Endothelial cell of umbilical vein (primary cell): ENCODE measurements at regions of chr10 and their contacts with region 1.

Region 1: GRCh38 chr10:118568327-118568848 is 27.1 kb downstream of the PRLHR start:
- DNase-seq: peak; percentile 61
- H3K4me3 ChIP-seq: no peak overlapping the region
- H3K27ac ChIP-seq: no peak overlapping the region
- H3K4me1 ChIP-seq: no peaks in the 10 kb centered on the region
- H3K27me3 ChIP-seq: peaks cover 0 to 6% of the 10 kb centered on the region in 2 experiments
- CTCF ChIP-seq: peak; percentile 45 to 52
- POLR2A ChIP-seq: no peak

Region 2: DNA sequence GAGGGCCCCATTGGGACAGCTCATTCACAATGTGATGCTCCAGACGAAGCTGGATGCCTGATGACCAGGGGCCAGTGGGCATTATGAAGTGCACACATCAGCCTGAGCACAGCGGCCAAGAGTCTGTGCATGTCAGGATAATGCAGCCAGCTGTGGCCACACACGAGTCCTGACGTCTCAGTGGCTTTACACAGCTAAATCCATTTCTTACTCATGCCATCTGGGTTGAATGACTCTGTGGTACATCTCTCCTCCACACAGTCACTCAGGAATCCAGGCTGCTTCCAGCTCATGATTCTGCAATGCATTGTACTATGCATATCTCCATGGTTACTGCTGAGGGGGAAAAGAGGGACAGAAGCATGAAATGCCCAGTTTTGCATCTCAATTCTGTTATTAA is 96.5 kb before region 1 on chr10:
- CTCF ChIA-PET with region 1: no interaction called
- POLR2A ChIA-PET with region 1: no interaction called
- dilution Hi-C with region 1: no loop called
- intact Hi-C with region 1: no loop called
- DNase-seq: no peak
- H3K4me3 ChIP-seq: no peak overlapping the region
- H3K27ac ChIP-seq: no peak overlapping the region
- H3K4me1 ChIP-seq: no peaks in the 10 kb centered on the region
- H3K27me3 ChIP-seq: no peaks in the 10 kb centered on the region
- CTCF ChIP-seq: no peak
- POLR2A ChIP-seq: no peak

Region 3: GRCh38 chr10:118557946-118558345 is 10.4 kb before region 1 on chr10:
- CTCF ChIA-PET with region 1: interaction called, 22 read pairs
- POLR2A ChIA-PET with region 1: no interaction called
- dilution Hi-C with region 1: no loop called
- intact Hi-C with region 1: no loop called
- DNase-seq: peak; percentile 62
- H3K4me3 ChIP-seq: no peak overlapping the region
- H3K27ac ChIP-seq: no peak overlapping the region
- H3K4me1 ChIP-seq: peaks cover 8% of the 10 kb centered on the region
- H3K27me3 ChIP-seq: peaks cover 0 to 3% of the 10 kb centered on the region in 2 experiments
- CTCF ChIP-seq: no peak
- POLR2A ChIP-seq: no peak

Region 4: DNA sequence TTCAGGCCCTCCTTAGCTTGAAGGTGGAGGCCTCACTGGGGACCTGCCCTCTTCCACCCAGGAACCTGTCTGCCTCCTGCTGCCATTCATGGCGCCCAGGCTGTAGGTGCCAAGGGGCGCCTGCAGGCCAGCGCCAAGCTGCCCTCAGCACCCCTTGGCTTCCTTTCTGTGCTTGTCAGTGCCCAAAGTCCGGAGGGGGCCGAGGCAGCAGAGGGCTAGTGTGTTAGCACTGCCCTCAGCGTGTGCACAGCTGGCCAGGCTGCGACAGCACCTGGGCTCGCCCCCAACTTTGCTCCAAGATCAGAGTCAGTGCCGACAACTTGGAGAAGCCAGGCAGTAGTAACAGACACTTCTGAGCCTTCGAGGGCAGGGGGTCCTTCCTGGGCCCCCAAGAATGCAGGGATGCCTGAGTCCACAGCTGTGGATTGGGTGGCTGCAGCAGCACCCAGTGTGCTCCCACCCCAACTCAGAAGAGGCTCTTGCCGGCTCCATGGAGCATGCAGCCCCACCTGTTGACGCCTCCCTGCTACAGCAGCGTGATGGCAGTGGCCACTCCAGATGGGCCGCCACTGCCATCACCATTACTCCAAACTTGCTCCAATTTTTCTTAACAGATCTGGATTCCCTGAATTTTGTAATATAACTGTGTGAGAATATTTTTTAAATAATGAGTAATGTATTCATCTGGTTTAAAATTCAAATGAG is 144.7 kb after region 1 on chr10:
- CTCF ChIA-PET with region 1: interaction called, 10 read pairs
- POLR2A ChIA-PET with region 1: no interaction called
- dilution Hi-C with region 1: no loop called
- intact Hi-C with region 1: no loop called
- DNase-seq: no peak
- H3K4me3 ChIP-seq: no peak overlapping the region
- H3K27ac ChIP-seq: no peak overlapping the region
- H3K4me1 ChIP-seq: no peaks in the 10 kb centered on the region
- H3K27me3 ChIP-seq: no peaks in the 10 kb centered on the region
- CTCF ChIP-seq: no peak
- POLR2A ChIP-seq: no peak

Region 5: DNA sequence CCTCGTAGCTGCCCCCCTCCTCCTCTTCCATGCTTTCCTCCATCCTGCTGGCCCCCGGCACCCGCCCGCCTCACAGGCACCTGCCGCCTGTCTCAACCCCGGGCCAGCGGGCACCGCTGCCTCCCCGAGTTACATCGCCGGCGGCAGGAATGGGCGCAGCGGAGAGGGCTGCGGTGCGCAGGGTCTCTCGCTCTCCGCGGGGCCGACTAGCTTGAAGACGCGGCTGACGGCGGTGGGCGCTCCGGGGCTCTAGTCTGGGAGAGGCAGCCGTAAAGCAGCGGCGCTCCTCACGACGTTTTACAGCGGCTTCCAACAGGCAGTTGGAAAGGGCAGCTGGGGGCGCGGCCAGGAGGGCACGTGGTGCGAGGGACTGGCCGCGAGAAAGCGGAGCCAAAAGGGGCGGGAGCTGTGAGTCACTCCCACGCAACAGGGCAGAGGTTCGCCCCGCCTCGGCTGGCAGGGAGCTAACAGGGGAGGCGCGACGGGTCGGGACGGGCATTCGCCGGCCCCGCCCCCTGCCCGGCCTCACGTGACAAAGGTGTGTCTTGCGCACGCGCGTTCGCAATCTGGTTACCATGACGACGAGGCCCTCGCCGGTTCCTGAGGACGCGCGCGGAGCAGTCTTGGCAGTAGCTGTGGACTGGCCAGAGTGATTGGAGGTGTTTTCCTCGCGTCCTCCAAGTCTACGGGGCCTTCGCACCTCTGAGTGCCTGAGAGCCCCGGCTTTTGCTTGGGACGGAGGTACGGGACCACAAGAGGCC is 186.5 kb after region 1 on chr10 and contains the start of gene CACUL1:
- CTCF ChIA-PET with region 1: interaction called, 15 read pairs
- POLR2A ChIA-PET with region 1: no interaction called
- dilution Hi-C with region 1: no loop called
- intact Hi-C with region 1: no loop called
- DNase-seq: peak; percentile 100
- H3K4me3 ChIP-seq: peak within 1 kb of the TSS; percentile 55 to 96 (median 84)
- H3K27ac ChIP-seq: peak within 1 kb of the TSS; percentile 42
- H3K4me1 ChIP-seq: peaks cover 13% of the 10 kb centered on the region
- H3K27me3 ChIP-seq: peaks cover 0 to 2% of the 10 kb centered on the region in 2 experiments
- CTCF ChIP-seq: no peak
- POLR2A ChIP-seq: peak; percentile 74
- total RNA-seq, gene CACUL1: 35.1 and 38.6 TPM in 2 replicates

Region 6: GRCh38 chr10:118850418-118851061 is 282.2 kb after region 1 on chr10:
- CTCF ChIA-PET with region 1: interaction called, 84 read pairs
- POLR2A ChIA-PET with region 1: no interaction called
- dilution Hi-C with region 1: no loop called
- intact Hi-C with region 1: loop called (anchors 1 kb)
- DNase-seq: peak; percentile 48
- H3K4me3 ChIP-seq: no peak overlapping the region
- H3K27ac ChIP-seq: no peak overlapping the region
- H3K4me1 ChIP-seq: no peaks in the 10 kb centered on the region
- H3K27me3 ChIP-seq: no peaks in the 10 kb centered on the region
- CTCF ChIP-seq: peak; percentile 64 to 65
- POLR2A ChIP-seq: no peak